CD4-positive, alpha-beta T cell (primary cell): ENCODE measurements at regions of chr19 and their contacts with region 1.

Region 1: GRCh38 chr19:48255376-48256303 is at the start of gene CARD8:
- DNase-seq: peak; percentile 61 to 94 (median 73)
- ATAC-seq: peak; percentile 88
- H3K4me3 ChIP-seq: peak within 1 kb of the TSS; percentile 67
- H3K4me3 Mint-ChIP-seq: peak within 1 kb of the TSS; percentile 93
- H3K27ac ChIP-seq: peak within 1 kb of the TSS; percentile 89 to 90
- H3K27ac Mint-ChIP-seq: peak within 1 kb of the TSS; percentile 97
- H3K4me1 ChIP-seq: peaks cover 66% of the 10 kb centered on the region
- H3K4me1 Mint-ChIP-seq: peaks cover 81% of the 10 kb centered on the region
- H3K27me3 ChIP-seq: no peaks in the 10 kb centered on the region
- H3K27me3 Mint-ChIP-seq: no peaks in the 10 kb centered on the region
- CTCF ChIP-seq: no peak
- total RNA-seq, gene CARD8: 71.1 to 73.1 TPM

Region 2: DNA sequence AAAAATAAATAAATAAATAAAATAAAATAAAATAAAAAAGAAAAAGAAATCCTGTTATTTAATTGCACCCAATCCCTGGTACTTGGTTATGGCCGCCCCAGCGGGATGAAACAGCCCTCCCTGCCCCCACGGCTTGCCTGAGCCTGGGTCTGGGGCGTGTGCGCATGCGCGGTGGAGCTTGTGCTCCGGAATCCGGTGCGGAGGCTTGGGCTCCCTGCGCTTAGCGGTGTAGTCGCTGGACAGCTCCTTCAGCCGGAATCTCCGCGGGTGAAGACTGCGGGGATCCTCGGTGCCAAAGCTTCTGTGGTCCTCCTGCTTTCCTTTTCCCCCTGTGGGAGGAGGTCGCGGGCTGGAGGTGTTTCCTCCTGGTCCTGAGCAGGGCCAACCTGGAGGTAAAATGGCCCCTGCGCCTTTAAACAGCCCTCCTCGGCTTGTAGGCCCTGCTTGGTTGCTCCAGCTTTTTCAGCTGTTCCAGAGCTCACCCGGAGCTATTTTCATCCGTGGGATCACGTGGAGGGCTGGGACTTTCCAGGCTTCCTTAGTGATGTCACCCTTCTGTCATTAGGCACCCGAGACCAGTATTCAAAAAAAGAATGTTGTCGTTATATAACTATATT is 145.2 kb before region 1 on chr19 and contains the start of gene PLA2G4C:
- CTCF ChIA-PET with region 1: interaction called, 4 read pairs
- POLR2A ChIA-PET with region 1: interaction called, 11 read pairs
- intact Hi-C with region 1: loop called (anchors 1 to 5 kb)
- DNase-seq: peak; percentile 63 to 92 (median 78)
- ATAC-seq: peak; percentile 83
- H3K4me3 ChIP-seq: peak within 1 kb of the TSS; percentile 75
- H3K4me3 Mint-ChIP-seq: peak within 1 kb of the TSS; percentile 89
- H3K27ac ChIP-seq: peak within 1 kb of the TSS; percentile 13 to 79
- H3K27ac Mint-ChIP-seq: peak within 1 kb of the TSS; percentile 86
- H3K4me1 ChIP-seq: peaks cover 21% of the 10 kb centered on the region
- H3K4me1 Mint-ChIP-seq: peaks cover 17% of the 10 kb centered on the region
- H3K27me3 ChIP-seq: no peaks in the 10 kb centered on the region
- H3K27me3 Mint-ChIP-seq: no peaks in the 10 kb centered on the region
- CTCF ChIP-seq: no peak
- total RNA-seq, gene PLA2G4C: 1.9 TPM

Region 3: DNA sequence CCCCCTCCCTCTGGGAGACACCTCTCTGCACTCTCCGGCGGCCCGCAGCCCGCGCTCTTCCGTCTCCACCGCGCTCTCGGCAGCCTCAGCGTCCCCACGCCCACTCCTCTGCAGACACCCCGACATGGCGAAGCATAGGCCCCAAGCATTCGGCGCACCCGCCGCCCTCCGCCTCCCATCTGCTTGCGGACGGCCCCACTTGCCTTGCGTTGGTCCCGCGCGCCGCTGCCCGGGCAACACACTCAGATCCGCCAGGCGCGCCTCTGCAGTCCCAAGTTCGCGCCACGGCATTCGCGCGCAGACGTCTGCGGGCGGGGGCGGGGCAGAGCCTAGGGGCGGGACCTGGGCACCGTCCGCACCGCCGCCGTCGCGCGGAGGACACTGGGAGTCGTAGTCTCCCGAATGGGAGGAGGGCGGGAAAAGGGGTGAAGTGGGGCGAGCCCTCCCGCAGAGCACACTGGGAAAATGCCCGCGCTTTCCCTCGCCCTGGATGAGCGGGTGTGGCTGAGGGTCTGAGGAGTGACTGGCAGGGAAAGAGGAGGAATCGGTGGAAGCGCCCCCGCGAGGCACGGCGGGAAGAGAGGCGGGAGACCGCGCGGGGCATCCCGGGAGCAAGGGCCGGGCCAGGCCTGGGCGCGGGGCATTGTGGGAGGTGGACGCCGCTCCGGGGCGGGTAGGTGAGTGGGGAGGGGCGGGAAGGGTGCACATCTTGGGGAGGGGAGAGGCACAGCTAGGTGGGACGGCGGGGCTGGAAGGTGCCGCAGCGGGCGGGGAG is 85.4 kb before region 1 on chr19 and contains the starts of genes LIG1 and ZSWIM9:
- CTCF ChIA-PET with region 1: interaction called, 11 read pairs
- POLR2A ChIA-PET with region 1: interaction called, 16 read pairs
- intact Hi-C with region 1: loop called (anchors 2 kb)
- DNase-seq: peak; percentile 82 to 96 (median 88)
- ATAC-seq: peak; percentile 81
- H3K4me3 ChIP-seq: peak within 1 kb of the TSS; percentile 88
- H3K4me3 Mint-ChIP-seq: peak within 1 kb of the TSS; percentile 97
- H3K27ac ChIP-seq: peak within 1 kb of the TSS; percentile 91 to 92
- H3K27ac Mint-ChIP-seq: peak within 1 kb of the TSS; percentile 98
- H3K4me1 ChIP-seq: peaks cover 16% of the 10 kb centered on the region
- H3K4me1 Mint-ChIP-seq: peaks cover 39% of the 10 kb centered on the region
- H3K27me3 ChIP-seq: no peaks in the 10 kb centered on the region
- H3K27me3 Mint-ChIP-seq: no peaks in the 10 kb centered on the region
- CTCF ChIP-seq: no peak
- total RNA-seq, gene LIG1: 62.8 to 70.7 TPM
- total RNA-seq, gene ZSWIM9: 2.5 to 3.1 TPM

Region 4: GRCh38 chr19:48218997-48219396 is 36.6 kb before region 1 on chr19:
- CTCF ChIA-PET with region 1: interaction called, 11 read pairs
- POLR2A ChIA-PET with region 1: interaction called, 5 read pairs
- intact Hi-C with region 1: no loop called
- DNase-seq: no peak
- ATAC-seq: no peak
- H3K4me3 ChIP-seq: no peak overlapping the region
- H3K4me3 Mint-ChIP-seq: no peak overlapping the region
- H3K27ac ChIP-seq: no peak overlapping the region
- H3K27ac Mint-ChIP-seq: no peak overlapping the region
- H3K4me1 ChIP-seq: no peaks in the 10 kb centered on the region
- H3K4me1 Mint-ChIP-seq: peaks cover 4% of the 10 kb centered on the region
- H3K27me3 ChIP-seq: no peaks in the 10 kb centered on the region
- H3K27me3 Mint-ChIP-seq: no peaks in the 10 kb centered on the region
- CTCF ChIP-seq: no peak

Region 5: DNA sequence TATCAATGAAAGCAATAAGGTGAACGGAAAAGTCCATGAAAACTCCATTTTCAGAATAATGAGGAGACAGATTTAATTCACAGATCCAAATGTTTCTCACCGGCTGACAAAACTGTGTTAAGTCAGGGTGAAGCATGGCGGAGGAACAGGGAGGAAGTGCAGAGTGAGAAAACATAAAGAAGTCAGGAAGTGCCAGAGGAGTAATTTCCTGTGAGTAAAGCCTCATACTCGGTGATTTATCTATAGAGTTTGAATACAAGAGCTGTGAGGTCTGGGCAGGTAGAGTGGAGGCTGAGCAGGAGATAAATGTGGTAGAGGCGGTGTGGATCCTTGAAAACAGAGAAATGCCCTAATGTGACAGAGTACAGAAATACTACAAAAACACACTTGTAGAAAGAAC is 11.4 kb before region 1 on chr19:
- CTCF ChIA-PET with region 1: interaction called, 24 read pairs
- POLR2A ChIA-PET with region 1: interaction called, 31 read pairs
- intact Hi-C with region 1: loop called in 1 of 2 experiments (anchors 2 kb)
- DNase-seq: peak in 12 of 14 experiments; percentile 21 to 76 (median 42)
- ATAC-seq: peak; percentile 98
- H3K4me3 ChIP-seq: peak overlapping the region; percentile 28
- H3K4me3 Mint-ChIP-seq: peak overlapping the region; percentile 70
- H3K27ac ChIP-seq: peak overlapping the region; percentile 56 to 64
- H3K27ac Mint-ChIP-seq: peak overlapping the region; percentile 89
- H3K4me1 ChIP-seq: peaks cover 30% of the 10 kb centered on the region
- H3K4me1 Mint-ChIP-seq: peaks cover 56% of the 10 kb centered on the region
- H3K27me3 ChIP-seq: no peaks in the 10 kb centered on the region
- H3K27me3 Mint-ChIP-seq: no peaks in the 10 kb centered on the region
- CTCF ChIP-seq: no peak

Region 6: GRCh38 chr19:48333467-48334384 is 78.1 kb after region 1 on chr19:
- CTCF ChIA-PET with region 1: interaction called, 7 read pairs
- POLR2A ChIA-PET with region 1: interaction called, 11 read pairs
- intact Hi-C with region 1: no loop called
- DNase-seq: peak; percentile 89 to 97 (median 95)
- ATAC-seq: peak; percentile 56
- H3K4me3 ChIP-seq: peak overlapping the region; percentile 97
- H3K4me3 Mint-ChIP-seq: peak overlapping the region; percentile 89
- H3K27ac ChIP-seq: peak overlapping the region; percentile 97
- H3K27ac Mint-ChIP-seq: peak overlapping the region; percentile 99
- H3K4me1 ChIP-seq: peaks cover 58% of the 10 kb centered on the region
- H3K4me1 Mint-ChIP-seq: peaks cover 47% of the 10 kb centered on the region
- H3K27me3 ChIP-seq: no peaks in the 10 kb centered on the region
- H3K27me3 Mint-ChIP-seq: no peaks in the 10 kb centered on the region
- CTCF ChIP-seq: peak; percentile 84

Region 7: GRCh38 chr19:48588670-48589399 is 333.2 kb after region 1 on chr19:
- CTCF ChIA-PET with region 1: no interaction called
- POLR2A ChIA-PET with region 1: no interaction called
- intact Hi-C with region 1: loop called in 1 of 2 experiments (anchors 10 kb)
- DNase-seq: peak; percentile 79 to 93 (median 86)
- ATAC-seq: peak; percentile 91
- H3K4me3 ChIP-seq: peak overlapping the region; percentile 54
- H3K4me3 Mint-ChIP-seq: peak overlapping the region; percentile 78
- H3K27ac ChIP-seq: peak overlapping the region in 1 of 2 donors; percentile 29
- H3K27ac Mint-ChIP-seq: peak overlapping the region; percentile 12
- H3K4me1 ChIP-seq: peaks cover 24% of the 10 kb centered on the region
- H3K4me1 Mint-ChIP-seq: peaks cover 15% of the 10 kb centered on the region
- H3K27me3 ChIP-seq: no peaks in the 10 kb centered on the region
- H3K27me3 Mint-ChIP-seq: peaks cover 5% of the 10 kb centered on the region
- CTCF ChIP-seq: peak; percentile 93